B cell (primary cell): ENCODE measurements at regions of chr12 and their contacts with region 1.

Region 1: GRCh38 chr12:14239350-14239934 is 126.0 kb upstream of the ATF7IP start:
- DNase-seq: peak; percentile 80
- ATAC-seq: peak; percentile 79
- H3K4me3 ChIP-seq: peak overlapping the region; percentile 26 to 53 (median 39)
- H3K4me3 Mint-ChIP-seq: peak overlapping the region; percentile 88
- H3K27ac ChIP-seq: peak overlapping the region; percentile 96 to 99
- H3K27ac Mint-ChIP-seq: peak overlapping the region; percentile 100
- H3K4me1 ChIP-seq: peaks cover 34 to 35% of the 10 kb centered on the region in 2 donors
- H3K4me1 Mint-ChIP-seq: peaks cover 35% of the 10 kb centered on the region
- H3K27me3 ChIP-seq: no peaks in the 10 kb centered on the region
- H3K27me3 Mint-ChIP-seq: no peaks in the 10 kb centered on the region
- CTCF ChIP-seq: no peak

Region 2: DNA sequence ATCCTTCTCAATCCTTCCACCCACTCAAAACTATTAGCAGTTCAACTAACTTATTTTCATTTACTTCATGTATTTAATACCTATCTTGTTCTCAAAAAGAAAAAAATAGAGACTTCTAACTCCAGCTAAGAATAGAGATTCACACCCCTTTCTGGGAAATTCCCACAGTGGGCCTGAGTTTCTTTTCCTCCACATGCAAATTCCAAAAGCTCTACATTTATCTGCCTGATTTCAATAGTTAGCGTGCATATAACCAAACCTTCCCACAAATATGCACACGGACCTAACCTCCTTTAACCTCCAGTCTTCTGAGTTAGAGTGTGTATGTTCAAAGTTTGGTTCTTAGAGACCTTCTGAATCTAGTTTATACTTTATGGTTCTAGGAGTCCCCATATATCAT is 320.5 kb before region 1 on chr12:
- CTCF ChIA-PET with region 1: no interaction called
- POLR2A ChIA-PET with region 1: no interaction called
- intact Hi-C with region 1: no loop called
- DNase-seq: no peak
- ATAC-seq: no peak
- H3K4me3 ChIP-seq: no peak overlapping the region
- H3K4me3 Mint-ChIP-seq: no peak overlapping the region
- H3K27ac ChIP-seq: no peak overlapping the region
- H3K27ac Mint-ChIP-seq: no peak overlapping the region
- H3K4me1 ChIP-seq: no peaks in the 10 kb centered on the region
- H3K4me1 Mint-ChIP-seq: peaks cover 2% of the 10 kb centered on the region
- H3K27me3 ChIP-seq: peaks cover 0 to 6% (median 3%) of the 10 kb centered on the region in 4 experiments
- H3K27me3 Mint-ChIP-seq: peaks cover 16% of the 10 kb centered on the region
- CTCF ChIP-seq: no peak

Region 3: GRCh38 chr12:14216405-14217294 is 22.8 kb before region 1 on chr12:
- CTCF ChIA-PET with region 1: interaction called, 12 read pairs
- POLR2A ChIA-PET with region 1: no interaction called
- intact Hi-C with region 1: no loop called
- DNase-seq: peak; percentile 40
- ATAC-seq: peak; percentile 54
- H3K4me3 ChIP-seq: peak overlapping the region in 4 of 5 experiments; percentile 1 to 62 (median 41)
- H3K4me3 Mint-ChIP-seq: peak overlapping the region; percentile 76
- H3K27ac ChIP-seq: peak overlapping the region in 1 of 2 donors; percentile 36
- H3K27ac Mint-ChIP-seq: peak overlapping the region; percentile 81
- H3K4me1 ChIP-seq: peaks cover 0 to 15% of the 10 kb centered on the region in 2 donors
- H3K4me1 Mint-ChIP-seq: peaks cover 22% of the 10 kb centered on the region
- H3K27me3 ChIP-seq: no peaks in the 10 kb centered on the region
- H3K27me3 Mint-ChIP-seq: no peaks in the 10 kb centered on the region
- CTCF ChIP-seq: no peak

Region 4: GRCh38 chr12:14289601-14290000 is 50.2 kb after region 1 on chr12:
- CTCF ChIA-PET with region 1: interaction called, 12 read pairs
- POLR2A ChIA-PET with region 1: no interaction called
- intact Hi-C with region 1: no loop called
- DNase-seq: no peak
- ATAC-seq: no peak
- H3K4me3 ChIP-seq: peak overlapping the region in 1 of 5 experiments; percentile 3
- H3K4me3 Mint-ChIP-seq: no peak overlapping the region
- H3K27ac ChIP-seq: no peak overlapping the region
- H3K27ac Mint-ChIP-seq: no peak overlapping the region
- H3K4me1 ChIP-seq: peaks cover 32 to 42% of the 10 kb centered on the region in 2 donors
- H3K4me1 Mint-ChIP-seq: peaks cover 39% of the 10 kb centered on the region
- H3K27me3 ChIP-seq: no peaks in the 10 kb centered on the region
- H3K27me3 Mint-ChIP-seq: no peaks in the 10 kb centered on the region
- CTCF ChIP-seq: no peak

Region 5: DNA sequence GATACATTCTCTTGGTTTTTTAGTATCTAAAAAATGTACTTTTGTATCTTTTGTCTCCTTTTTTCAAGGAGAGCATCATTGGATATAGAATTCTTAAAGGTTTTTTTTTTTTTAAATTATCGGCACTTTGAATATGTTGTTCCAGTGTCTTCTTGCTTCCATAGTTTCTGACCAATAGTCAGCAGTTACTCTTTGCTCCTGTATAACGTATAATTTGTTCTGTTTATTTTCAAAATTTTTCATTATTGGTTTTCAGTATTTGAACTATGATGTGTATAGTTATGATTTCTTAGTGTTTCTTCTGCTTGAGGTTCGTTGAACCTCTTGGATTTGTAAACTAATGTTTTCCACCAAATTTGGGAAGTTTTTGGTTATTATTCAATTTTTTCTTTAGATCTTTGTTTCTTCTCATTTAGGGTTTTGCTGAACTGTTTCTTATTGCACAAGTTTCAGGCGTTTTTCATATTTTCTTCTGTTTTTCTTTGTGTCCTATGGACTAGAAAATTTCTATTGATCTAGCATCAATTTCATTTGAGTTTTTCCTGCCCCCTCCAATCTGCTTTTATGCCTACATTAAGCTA is 234.4 kb after region 1 on chr12:
- CTCF ChIA-PET with region 1: interaction called, 13 read pairs
- POLR2A ChIA-PET with region 1: no interaction called
- intact Hi-C with region 1: no loop called
- DNase-seq: peak; percentile 42
- ATAC-seq: no peak
- H3K4me3 ChIP-seq: no peak overlapping the region
- H3K4me3 Mint-ChIP-seq: no peak overlapping the region
- H3K27ac ChIP-seq: no peak overlapping the region
- H3K27ac Mint-ChIP-seq: no peak overlapping the region
- H3K4me1 ChIP-seq: no peaks in the 10 kb centered on the region
- H3K4me1 Mint-ChIP-seq: no peaks in the 10 kb centered on the region
- H3K27me3 ChIP-seq: no peaks in the 10 kb centered on the region
- H3K27me3 Mint-ChIP-seq: no peaks in the 10 kb centered on the region
- CTCF ChIP-seq: no peak

Region 6: GRCh38 chr12:14664510-14664909 is 425.1 kb after region 1 on chr12:
- CTCF ChIA-PET with region 1: interaction called, 48 read pairs
- POLR2A ChIA-PET with region 1: no interaction called
- intact Hi-C with region 1: no loop called
- DNase-seq: peak; percentile 77
- ATAC-seq: peak; percentile 80
- H3K4me3 ChIP-seq: no peak overlapping the region
- H3K4me3 Mint-ChIP-seq: no peak overlapping the region
- H3K27ac ChIP-seq: no peak overlapping the region
- H3K27ac Mint-ChIP-seq: no peak overlapping the region
- H3K4me1 ChIP-seq: no peaks in the 10 kb centered on the region
- H3K4me1 Mint-ChIP-seq: peaks cover 12% of the 10 kb centered on the region
- H3K27me3 ChIP-seq: no peaks in the 10 kb centered on the region
- H3K27me3 Mint-ChIP-seq: no peaks in the 10 kb centered on the region
- CTCF ChIP-seq: peak; percentile 82

Region 7: GRCh38 chr12:14995583-14996425 is 756.4 kb after region 1 on chr12:
- CTCF ChIA-PET with region 1: interaction called, 6 read pairs
- POLR2A ChIA-PET with region 1: no interaction called
- intact Hi-C with region 1: loop called (anchors 2 kb)
- DNase-seq: peak; percentile 79
- ATAC-seq: peak; percentile 45
- H3K4me3 ChIP-seq: no peak overlapping the region
- H3K4me3 Mint-ChIP-seq: no peak overlapping the region
- H3K27ac ChIP-seq: no peak overlapping the region
- H3K27ac Mint-ChIP-seq: peak overlapping the region; percentile 38
- H3K4me1 ChIP-seq: peaks cover 34 to 36% of the 10 kb centered on the region in 2 donors
- H3K4me1 Mint-ChIP-seq: peaks cover 39% of the 10 kb centered on the region
- H3K27me3 ChIP-seq: peaks cover 0 to 4% (median 1%) of the 10 kb centered on the region in 4 experiments
- H3K27me3 Mint-ChIP-seq: peaks cover 5% of the 10 kb centered on the region
- CTCF ChIP-seq: peak; percentile 83